Left ventricle myocardium superior (tissue), 1 donor: ENCODE measurements at regions of chr10 and their contacts with region 1.

Region 1: DNA sequence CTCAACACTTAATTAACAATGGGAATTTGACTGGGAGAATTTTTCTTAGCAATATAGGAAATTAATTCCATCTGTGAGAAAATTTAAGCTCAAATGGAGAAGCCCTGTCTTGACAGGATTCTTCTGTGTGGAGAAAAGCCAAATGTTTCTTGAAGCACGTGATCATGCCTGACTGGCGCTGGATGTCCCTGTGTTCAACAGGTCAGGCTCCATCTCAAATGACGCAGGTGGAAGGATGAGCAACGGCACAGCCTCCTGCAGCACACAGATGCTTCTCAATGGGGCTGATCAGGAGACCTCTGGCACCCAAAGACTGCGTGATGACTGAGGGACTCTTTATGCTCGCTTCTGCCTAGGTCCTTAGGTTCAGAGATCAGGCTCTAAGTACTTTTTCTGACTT is 143.8 kb downstream of the RSU1 start:
- DNase-seq: no peak
- ATAC-seq: no peak

Region 2: GRCh38 chr10:16756561-16757222 is 83.2 kb after region 1 on chr10:
- intact Hi-C with region 1: loop called (anchors 10 kb)
- DNase-seq: no peak
- ATAC-seq: no peak